ENCODE measurements at regions of chr7 and their contacts with region 1.

Region 1: DNA sequence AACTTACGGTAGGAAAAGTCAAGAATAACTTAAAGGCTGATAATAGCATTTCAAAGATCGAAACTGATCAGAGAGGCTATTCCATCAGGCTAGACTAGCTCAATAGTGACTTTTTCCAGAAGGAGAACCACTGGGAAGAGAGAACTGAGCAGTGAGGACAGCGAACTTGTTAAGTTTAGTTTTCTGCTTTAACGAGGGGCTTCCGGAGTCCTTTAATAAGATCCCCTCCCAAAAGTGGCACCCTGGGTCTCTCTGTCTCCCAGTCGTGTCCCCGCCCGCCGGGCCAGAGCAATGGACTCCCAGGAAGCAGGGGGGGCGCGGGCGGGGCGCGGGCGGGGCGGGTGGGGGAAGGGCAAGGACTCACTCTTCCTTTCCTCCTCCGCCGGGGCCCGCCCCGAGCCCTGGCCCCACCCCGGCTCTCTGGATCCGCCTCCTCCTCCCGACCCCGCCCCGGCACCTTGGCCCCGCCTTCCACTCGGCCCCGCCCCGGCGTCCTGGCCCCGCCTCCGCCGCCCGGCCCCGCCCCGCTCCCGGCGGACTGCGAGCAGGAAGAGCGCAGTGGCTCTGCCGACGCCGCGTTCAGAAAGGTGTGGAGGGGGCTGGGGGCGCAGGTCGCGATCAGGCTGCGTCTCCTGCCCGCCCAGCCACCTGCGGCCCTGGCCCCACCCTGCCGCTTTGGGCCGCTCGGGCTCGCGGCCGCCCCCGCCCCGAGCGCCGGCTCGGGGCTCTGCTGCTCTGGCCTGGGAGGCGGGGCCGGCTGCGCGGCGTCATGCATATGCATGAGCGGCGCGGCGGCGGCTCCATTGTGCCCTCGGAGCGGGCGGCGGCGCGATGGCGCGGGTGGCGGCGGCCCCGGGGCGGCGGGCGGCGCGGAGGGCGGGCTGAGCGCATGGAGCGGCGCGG is at the start of gene ZMIZ2:
- DNase-seq: peak; percentile 92
- H3K4me3 Mint-ChIP-seq: peak within 1 kb of the TSS; percentile 84
- H3K27ac Mint-ChIP-seq: peak within 1 kb of the TSS; percentile 66
- H3K4me1 Mint-ChIP-seq: peaks cover 43% of the 10 kb centered on the region
- H3K27me3 Mint-ChIP-seq: no peaks in the 10 kb centered on the region
- total RNA-seq, gene ZMIZ2: 85.2 to 91.4 TPM

Region 2: GRCh38 chr7:44724276-44724675 is 24.0 kb before region 1 on chr7:
- CTCF ChIA-PET with region 1: no interaction called
- POLR2A ChIA-PET with region 1: no interaction called
- DNase-seq: no peak
- H3K4me3 Mint-ChIP-seq: no peak overlapping the region
- H3K27ac Mint-ChIP-seq: no peak overlapping the region
- H3K4me1 Mint-ChIP-seq: peaks cover 3% of the 10 kb centered on the region
- H3K27me3 Mint-ChIP-seq: peaks cover 5% of the 10 kb centered on the region

Region 3: DNA sequence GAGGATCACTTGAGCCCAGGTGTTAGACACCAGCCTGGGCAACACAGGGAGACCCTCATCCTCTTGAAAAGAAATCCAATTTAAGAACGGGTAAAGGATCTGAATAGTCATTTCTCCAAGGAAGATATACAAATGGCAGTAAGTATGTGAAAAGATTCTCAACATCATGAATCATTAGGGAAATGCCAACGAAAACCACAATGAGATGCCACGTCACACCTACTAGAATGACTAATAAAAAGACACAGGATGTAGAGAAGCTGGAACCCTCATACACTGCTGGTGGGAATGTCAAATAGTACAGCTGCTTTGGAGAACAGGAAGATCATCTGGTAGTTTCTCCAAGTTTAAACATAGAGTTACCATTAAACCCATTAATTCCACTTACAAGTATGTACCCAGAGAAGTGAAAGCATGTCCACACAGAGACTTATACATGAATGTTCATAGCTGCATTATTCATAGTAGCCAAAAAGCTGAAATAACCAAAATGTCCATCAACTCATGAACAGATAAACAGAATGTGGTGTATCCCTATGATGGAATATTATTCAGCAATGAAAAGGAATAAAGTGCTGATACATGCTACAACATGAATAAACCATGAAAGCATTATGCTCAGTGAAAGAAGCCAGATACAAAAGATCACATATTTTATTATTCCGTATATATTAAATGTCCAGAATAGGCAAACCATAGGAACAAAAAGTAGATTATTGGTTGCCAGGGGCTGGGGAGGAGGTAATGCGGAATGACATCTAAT is 12.7 kb before region 1 on chr7:
- CTCF ChIA-PET with region 1: interaction called, 3 read pairs
- POLR2A ChIA-PET with region 1: interaction called, 21 read pairs
- DNase-seq: peak; percentile 60
- H3K4me3 Mint-ChIP-seq: no peak overlapping the region
- H3K27ac Mint-ChIP-seq: peak overlapping the region; percentile 54
- H3K4me1 Mint-ChIP-seq: peaks cover 13% of the 10 kb centered on the region
- H3K27me3 Mint-ChIP-seq: no peaks in the 10 kb centered on the region

Region 4: GRCh38 chr7:44769776-44770662 is 21.7 kb after region 1 on chr7:
- CTCF ChIA-PET with region 1: no interaction called
- POLR2A ChIA-PET with region 1: interaction called, 12 read pairs
- DNase-seq: peak; percentile 46
- H3K4me3 Mint-ChIP-seq: no peak overlapping the region
- H3K27ac Mint-ChIP-seq: peak overlapping the region; percentile 27
- H3K4me1 Mint-ChIP-seq: peaks cover 33% of the 10 kb centered on the region
- H3K27me3 Mint-ChIP-seq: peaks cover 4% of the 10 kb centered on the region

Region 5: DNA sequence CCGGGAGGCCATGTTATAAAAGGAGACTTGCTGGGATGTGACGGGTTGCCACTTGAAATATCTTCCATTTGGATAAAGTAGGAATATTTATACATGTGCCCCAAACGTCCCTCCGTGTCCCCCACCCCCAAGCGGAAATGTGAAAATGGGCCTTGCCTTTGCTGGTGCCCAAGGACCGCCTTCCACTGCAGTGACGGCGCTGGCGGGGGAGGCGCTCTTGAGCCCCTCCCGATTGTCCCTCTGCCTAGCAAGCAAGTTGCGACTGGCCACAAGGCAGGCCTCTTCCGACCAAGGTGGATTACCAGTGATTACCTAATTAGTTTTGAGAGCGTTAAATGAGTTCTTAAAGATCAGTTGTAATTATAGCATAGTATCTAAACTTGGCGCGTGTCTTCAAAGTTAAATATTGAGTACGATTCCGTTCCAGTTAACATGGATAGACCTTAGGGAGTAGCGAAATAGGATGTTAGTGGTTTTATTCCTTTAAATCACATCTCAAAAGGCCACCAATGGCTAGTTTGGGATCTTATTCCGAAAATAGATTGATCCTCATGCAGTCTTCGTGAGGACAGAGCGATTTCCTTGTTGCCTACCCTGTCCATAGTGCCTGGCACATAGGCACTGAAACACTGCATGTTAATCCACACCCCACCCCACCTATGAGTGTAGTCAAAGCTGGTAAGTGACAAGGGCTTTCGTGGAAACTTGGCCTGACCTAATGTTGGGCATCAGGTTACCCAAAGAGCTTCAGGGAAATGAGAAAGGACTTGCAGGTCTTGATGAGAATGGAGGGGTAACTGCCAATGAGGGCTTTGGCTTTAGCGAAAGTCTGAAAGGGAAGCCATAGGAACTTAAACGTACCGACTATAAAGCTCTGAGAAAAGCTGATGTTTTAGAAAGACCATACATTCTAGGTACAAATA is 49.3 kb after region 1 on chr7:
- CTCF ChIA-PET with region 1: interaction called, 8 read pairs
- POLR2A ChIA-PET with region 1: interaction called, 15 read pairs
- DNase-seq: peak; percentile 89
- H3K4me3 Mint-ChIP-seq: peak overlapping the region; percentile 81
- H3K27ac Mint-ChIP-seq: peak overlapping the region; percentile 93
- H3K4me1 Mint-ChIP-seq: peaks cover 44% of the 10 kb centered on the region
- H3K27me3 Mint-ChIP-seq: no peaks in the 10 kb centered on the region